BJ (cell line): ENCODE measurements at regions of chr14 and their contacts with region 1.

Region 1: GRCh38 chr14:104752735-104753531 is at the start of gene SIVA1:
- DNase-seq: peak; percentile 94
- H3K4me3 ChIP-seq: peak within 1 kb of the TSS; percentile 97
- H3K27me3 ChIP-seq: no peaks in the 10 kb centered on the region
- CTCF ChIP-seq: no peak
- polyA plus RNA-seq, gene SIVA1: 83.5 and 116 TPM in 2 replicates

Region 2: DNA sequence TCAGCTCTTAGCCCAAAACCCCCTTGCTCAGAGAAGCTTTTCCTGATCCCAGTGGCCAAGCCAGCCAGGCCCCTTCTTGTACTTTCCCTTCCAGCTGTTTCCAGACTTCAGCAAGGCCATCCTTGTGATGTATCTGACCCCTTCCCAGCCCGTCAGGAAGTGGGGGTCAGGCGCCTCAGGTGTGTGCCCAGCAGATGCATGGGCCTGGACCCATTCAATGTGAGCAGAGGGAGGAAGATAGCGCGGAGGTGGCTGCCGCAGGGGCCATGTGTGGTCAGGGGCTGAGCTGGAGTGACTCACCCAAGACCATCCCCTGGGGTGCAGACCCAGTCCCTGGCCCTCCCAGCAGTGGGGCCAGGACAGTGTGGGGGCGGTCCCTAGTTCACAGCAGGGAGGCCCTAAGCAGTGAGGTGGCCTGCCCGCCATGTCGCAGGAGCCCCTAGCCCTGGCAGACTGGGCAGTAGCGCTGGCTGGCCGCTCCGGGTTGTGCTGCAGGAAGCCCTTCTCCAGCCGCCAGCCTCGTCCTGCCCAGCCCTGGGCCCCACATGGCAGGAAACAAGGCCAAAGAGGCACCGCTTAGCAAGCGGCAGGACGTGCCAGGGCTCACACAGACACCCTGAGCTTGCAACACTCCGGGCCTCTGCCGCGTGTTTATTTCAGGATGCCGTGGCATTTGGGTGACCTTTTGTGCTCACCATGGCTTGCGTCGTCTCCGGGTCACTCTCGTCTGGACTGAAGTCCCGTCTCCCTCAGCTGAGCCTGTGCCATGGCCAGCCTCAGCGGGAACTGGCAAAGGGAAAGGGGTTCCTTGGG is 16.9 kb before region 1 on chr14:
- CTCF ChIA-PET with region 1: interaction called, 10 read pairs
- POLR2A ChIA-PET with region 1: no interaction called
- DNase-seq: peak; percentile 29
- H3K4me3 ChIP-seq: no peak overlapping the region
- H3K27me3 ChIP-seq: no peaks in the 10 kb centered on the region
- CTCF ChIP-seq: no peak

Region 3: GRCh38 chr14:104870420-104871144 is 117.6 kb after region 1 on chr14:
- CTCF ChIA-PET with region 1: no interaction called
- POLR2A ChIA-PET with region 1: no interaction called
- DNase-seq: no peak
- H3K4me3 ChIP-seq: no peak overlapping the region
- H3K27me3 ChIP-seq: no peaks in the 10 kb centered on the region
- CTCF ChIP-seq: peak; percentile 41